Aorta (tissue), 5 donors: ENCODE measurements at regions of chrX and their contacts with region 1.

Region 1: DNA sequence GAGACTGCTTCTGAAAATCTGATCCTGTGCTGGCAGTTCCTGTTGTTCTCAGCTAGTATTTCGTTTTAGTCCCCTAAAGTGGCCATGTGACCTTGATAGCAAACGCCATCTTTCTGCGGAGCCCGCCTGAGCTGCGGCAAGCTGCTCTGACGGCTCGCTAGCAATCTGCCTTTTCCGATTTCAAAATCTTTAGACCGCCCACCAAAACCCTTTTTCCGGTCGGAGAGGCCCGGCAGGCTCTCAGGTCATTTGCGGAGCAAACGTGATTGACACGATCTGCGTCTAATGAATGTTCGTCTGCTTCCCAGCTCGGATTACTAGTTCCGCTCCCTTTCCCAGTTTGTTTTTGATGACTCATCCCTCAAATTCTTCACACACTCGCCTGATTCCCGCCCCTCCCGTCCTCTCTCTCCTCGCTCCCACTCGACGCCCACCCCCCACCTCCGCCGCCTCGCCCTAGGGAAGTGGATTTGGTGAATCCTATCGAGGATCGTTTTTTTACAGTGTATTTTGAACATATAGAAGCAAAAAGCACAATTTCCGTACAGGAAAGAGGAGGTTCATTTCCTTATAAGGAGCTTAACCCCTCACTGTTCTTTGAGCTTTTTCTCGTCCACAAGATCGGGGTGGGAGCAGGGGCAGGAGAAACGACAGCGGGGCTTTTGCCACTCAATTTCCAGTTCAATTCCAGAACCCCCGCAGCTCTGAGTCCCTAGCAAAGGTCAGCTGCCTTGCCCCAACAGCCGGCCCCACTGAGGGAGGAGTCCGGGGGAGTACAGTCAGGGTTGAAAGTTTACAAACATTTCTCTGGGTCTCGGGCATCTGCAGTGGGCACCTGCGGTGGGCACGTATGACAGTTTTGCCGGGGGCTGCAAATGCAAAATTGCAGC is 37.5 kb downstream of the NLGN3 start:
- DNase-seq: peak; percentile 90
- ATAC-seq: peak; percentile 92
- H3K4me3 ChIP-seq: peak overlapping the region; percentile 21 to 69
- H3K27ac ChIP-seq: peak overlapping the region in 1 of 2 donors; percentile 86
- H3K4me1 ChIP-seq: no peaks in the 10 kb centered on the region
- H3K27me3 ChIP-seq: no peaks in the 10 kb centered on the region

Region 2: DNA sequence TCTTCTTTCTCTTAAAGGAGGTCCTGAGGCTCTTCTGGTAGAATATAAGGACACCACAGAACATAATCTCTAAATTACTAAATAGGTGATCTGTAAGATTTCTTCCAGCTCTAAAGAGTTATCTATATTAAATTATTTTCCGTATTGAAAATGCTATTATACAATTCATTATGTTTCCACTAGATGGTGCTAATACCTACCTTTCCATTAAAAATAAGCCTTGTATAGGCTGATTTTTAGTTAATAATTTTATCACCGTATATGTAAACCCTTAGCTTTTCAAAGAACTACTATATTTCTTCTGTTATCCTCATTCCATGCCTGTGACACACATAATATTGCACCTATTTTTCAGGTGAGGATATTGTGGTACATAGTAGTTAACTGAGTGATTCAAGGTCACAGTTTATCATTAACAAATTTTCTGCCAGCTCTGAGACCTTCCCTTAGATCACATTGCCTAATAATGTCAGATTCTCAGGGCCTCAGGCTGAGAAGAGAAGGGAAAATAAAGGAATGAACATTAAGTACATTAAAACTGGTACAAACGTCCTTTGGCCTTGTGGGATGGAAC is 412.4 kb before region 1 on chrX:
- intact Hi-C with region 1: loop called in 1 of 2 experiments (anchors 10 kb)
- DNase-seq: no peak
- ATAC-seq: no peak
- H3K4me3 ChIP-seq: no peak overlapping the region
- H3K27ac ChIP-seq: no peak overlapping the region
- H3K4me1 ChIP-seq: no peaks in the 10 kb centered on the region
- H3K27me3 ChIP-seq: no peaks in the 10 kb centered on the region

Region 3: GRCh38 chrX:70970482-70970995 is 211.6 kb before region 1 on chrX:
- intact Hi-C with region 1: loop called (anchors 5 kb)
- DNase-seq: no peak
- ATAC-seq: no peak
- H3K4me3 ChIP-seq: no peak overlapping the region
- H3K27ac ChIP-seq: no peak overlapping the region
- H3K4me1 ChIP-seq: no peaks in the 10 kb centered on the region
- H3K27me3 ChIP-seq: no peaks in the 10 kb centered on the region

Region 4: DNA sequence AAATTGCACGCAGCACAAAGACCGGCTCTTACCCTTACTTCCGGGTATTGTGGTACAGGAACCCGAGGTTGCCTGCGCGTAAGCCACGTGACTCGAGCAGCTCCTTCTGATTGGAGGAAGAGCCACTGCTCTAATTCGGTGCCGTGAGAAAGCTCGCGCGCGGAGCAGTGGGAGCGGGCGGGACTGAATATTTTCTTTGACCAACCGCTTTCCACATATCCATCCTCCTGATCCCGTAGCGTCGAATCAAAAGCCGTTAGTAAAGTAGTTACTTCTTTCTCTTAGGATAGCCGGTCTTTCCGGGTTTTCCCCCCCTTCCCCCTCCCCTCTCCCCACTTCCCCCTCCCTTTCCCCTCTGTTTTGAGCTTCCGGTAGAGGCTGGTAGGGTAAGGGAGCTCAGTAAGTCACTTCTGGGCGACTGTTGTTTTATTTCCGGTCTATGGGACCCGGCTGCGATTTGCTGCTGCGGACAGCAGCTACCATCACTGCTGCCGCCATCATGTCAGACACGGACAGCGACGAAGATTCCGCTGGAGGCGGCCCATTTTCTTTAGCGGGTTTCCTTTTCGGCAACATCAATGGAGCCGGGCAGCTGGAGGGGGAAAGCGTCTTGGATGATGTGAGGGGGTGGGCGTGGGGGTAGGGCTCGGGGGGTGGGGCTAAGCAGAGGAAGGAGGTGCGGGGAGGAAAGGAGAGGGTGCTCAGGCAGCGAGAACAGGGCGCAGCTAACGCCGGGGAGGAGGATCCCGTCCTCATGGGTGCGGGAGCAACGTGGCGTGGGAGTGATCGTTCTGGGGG is 183.9 kb after region 1 on chrX and contains the start of gene TAF1:
- intact Hi-C with region 1: loop called in 1 of 2 experiments (anchors 10 kb)
- DNase-seq: peak; percentile 95 to 97
- ATAC-seq: peak; percentile 94
- H3K4me3 ChIP-seq: peak within 1 kb of the TSS; percentile 39 to 90
- H3K27ac ChIP-seq: peak within 1 kb of the TSS in 1 of 2 donors; percentile 93
- H3K4me1 ChIP-seq: no peaks in the 10 kb centered on the region
- H3K27me3 ChIP-seq: no peaks in the 10 kb centered on the region
- total RNA-seq, gene TAF1: 45.0 to 58.5 TPM